Mammary epithelial cell (primary cell): ENCODE measurements at regions of chr12 and their contacts with region 1.

Region 1: GRCh38 chr12:104201238-104202001 is 14.2 kb upstream of the TXNRD1 start:
- DNase-seq: peak; percentile 41
- H3K4me3 ChIP-seq: no peak overlapping the region
- H3K27ac ChIP-seq: no peak overlapping the region
- H3K4me1 ChIP-seq: no peaks in the 10 kb centered on the region
- H3K27me3 ChIP-seq: no peaks in the 10 kb centered on the region
- CTCF ChIP-seq: peak; percentile 90 to 93

Region 2: GRCh38 chr12:104057771-104058197 is 143.6 kb before region 1 on chr12:
- CTCF ChIA-PET with region 1: no interaction called
- dilution Hi-C with region 1: no loop called
- in situ Hi-C with region 1: no loop called
- intact Hi-C with region 1: loop called (anchors 10 kb)
- DNase-seq: no peak
- H3K4me3 ChIP-seq: no peak overlapping the region
- H3K27ac ChIP-seq: no peak overlapping the region
- H3K4me1 ChIP-seq: peaks cover 24% of the 10 kb centered on the region
- H3K27me3 ChIP-seq: no peaks in the 10 kb centered on the region
- CTCF ChIP-seq: peak; percentile 80 to 86

Region 3: DNA sequence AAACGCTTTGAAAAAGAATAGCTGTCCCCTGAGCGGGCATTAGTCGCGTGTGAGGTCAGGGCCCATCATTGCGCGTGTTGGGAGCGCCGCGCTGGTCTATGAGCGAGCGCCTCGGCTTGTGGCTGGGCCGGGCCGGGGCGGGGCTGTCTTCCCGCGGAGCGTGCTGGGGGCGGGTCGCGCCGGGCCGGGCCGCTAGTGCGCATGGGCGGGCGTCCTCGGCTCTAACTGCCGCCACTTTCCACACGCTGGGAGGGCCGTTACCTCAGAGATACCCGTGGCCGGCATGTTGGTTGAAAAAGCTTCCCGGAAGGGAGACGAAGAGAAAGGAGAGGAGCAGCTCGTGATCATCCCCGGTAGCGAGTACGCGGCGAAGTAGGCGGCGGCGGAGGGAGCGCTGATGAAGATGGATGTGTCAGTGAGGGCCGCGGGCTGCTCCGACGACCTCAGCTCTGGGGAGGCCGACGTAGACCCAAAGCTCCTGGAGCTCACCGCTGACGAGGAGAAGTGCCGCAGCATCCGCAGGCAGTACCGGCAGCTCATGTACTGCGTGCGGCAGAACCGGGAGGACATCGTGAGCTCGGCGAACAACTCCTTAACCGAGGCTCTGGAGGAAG is 102.2 kb after region 1 on chr12 and contains the start of gene EID3:
- CTCF ChIA-PET with region 1: interaction called, 3 read pairs
- dilution Hi-C with region 1: no loop called
- in situ Hi-C with region 1: no loop called
- intact Hi-C with region 1: loop called (anchors 5 kb)
- DNase-seq: peak; percentile 71
- H3K4me3 ChIP-seq: peak within 1 kb of the TSS; percentile 32 to 55 (median 46)
- H3K27ac ChIP-seq: peak within 1 kb of the TSS; percentile 61
- H3K4me1 ChIP-seq: peaks cover 20% of the 10 kb centered on the region
- H3K27me3 ChIP-seq: no peaks in the 10 kb centered on the region
- CTCF ChIP-seq: no peak
- total RNA-seq, gene EID3: 5.3 to 6.3 TPM

Region 4: GRCh38 chr12:104376650-104377541 is 175.5 kb after region 1 on chr12:
- CTCF ChIA-PET with region 1: no interaction called
- dilution Hi-C with region 1: no loop called
- in situ Hi-C with region 1: no loop called
- intact Hi-C with region 1: loop called (anchors 1 kb)
- DNase-seq: no peak
- H3K4me3 ChIP-seq: no peak overlapping the region
- H3K27ac ChIP-seq: no peak overlapping the region
- H3K4me1 ChIP-seq: no peaks in the 10 kb centered on the region
- H3K27me3 ChIP-seq: no peaks in the 10 kb centered on the region
- CTCF ChIP-seq: no peak

Region 5: GRCh38 chr12:104456417-104456949 is 255.1 kb after region 1 on chr12 and contains the start of gene CHST11:
- CTCF ChIA-PET with region 1: no interaction called
- dilution Hi-C with region 1: no loop called
- in situ Hi-C with region 1: no loop called
- intact Hi-C with region 1: loop called (anchors 1 kb)
- DNase-seq: peak; percentile 82
- H3K4me3 ChIP-seq: peak within 1 kb of the TSS; percentile 56 to 77 (median 68)
- H3K27ac ChIP-seq: peak within 1 kb of the TSS; percentile 60
- H3K4me1 ChIP-seq: peaks cover 36% of the 10 kb centered on the region
- H3K27me3 ChIP-seq: no peaks in the 10 kb centered on the region
- CTCF ChIP-seq: peak in 1 of 2 donors; percentile 37
- total RNA-seq, gene CHST11: 7.7 to 35.5 TPM

Region 6: GRCh38 chr12:104588068-104588920 is 386.9 kb after region 1 on chr12:
- CTCF ChIA-PET with region 1: no interaction called
- dilution Hi-C with region 1: no loop called
- in situ Hi-C with region 1: no loop called
- intact Hi-C with region 1: no loop called
- DNase-seq: peak; percentile 97
- H3K4me3 ChIP-seq: peak overlapping the region; percentile 13 to 45 (median 32)
- H3K27ac ChIP-seq: peak overlapping the region; percentile 94
- H3K4me1 ChIP-seq: peaks cover 58% of the 10 kb centered on the region
- H3K27me3 ChIP-seq: no peaks in the 10 kb centered on the region
- CTCF ChIP-seq: no peak

Region 7: DNA sequence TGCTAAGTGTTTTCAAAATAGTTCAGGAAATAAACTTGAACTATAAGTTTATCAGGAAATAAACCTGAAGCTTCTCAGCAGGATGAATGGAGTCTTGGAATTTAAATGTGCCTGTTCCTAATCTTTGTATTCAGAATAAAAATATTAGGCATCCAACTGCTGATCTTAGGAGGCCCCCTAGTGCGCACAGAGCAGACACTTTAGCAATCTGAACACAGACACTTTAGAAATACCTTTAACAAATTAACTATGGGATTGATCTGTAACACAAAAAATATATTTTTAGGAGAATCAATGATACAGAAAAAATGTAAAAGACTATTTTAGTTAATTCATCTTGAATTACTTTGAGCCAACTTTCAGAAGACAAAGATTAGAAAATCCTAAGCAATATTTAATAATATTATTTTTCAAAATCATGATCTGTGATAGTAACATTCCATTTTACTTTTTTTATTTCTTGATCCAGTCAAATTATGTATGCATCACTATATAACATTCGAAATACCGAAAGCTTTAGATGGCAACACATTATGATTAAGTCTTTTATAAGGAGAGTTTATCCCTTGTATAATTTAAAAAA is 675.8 kb after region 1 on chr12:
- CTCF ChIA-PET with region 1: no interaction called
- dilution Hi-C with region 1: no loop called
- in situ Hi-C with region 1: loop called in 1 of 2 experiments (anchors 25 kb)
- intact Hi-C with region 1: loop called (anchors 2 kb)
- DNase-seq: peak; percentile 19
- H3K4me3 ChIP-seq: no peak overlapping the region
- H3K27ac ChIP-seq: no peak overlapping the region
- H3K4me1 ChIP-seq: no peaks in the 10 kb centered on the region
- H3K27me3 ChIP-seq: no peaks in the 10 kb centered on the region
- CTCF ChIP-seq: peak; percentile 56 to 74

Region 8: GRCh38 chr12:105382771-105383622 is 1181.6 kb after region 1 on chr12:
- CTCF ChIA-PET with region 1: no interaction called
- dilution Hi-C with region 1: no loop called
- in situ Hi-C with region 1: no loop called
- intact Hi-C with region 1: loop called (anchors 5 kb)
- DNase-seq: peak; percentile 47
- H3K4me3 ChIP-seq: no peak overlapping the region
- H3K27ac ChIP-seq: no peak overlapping the region
- H3K4me1 ChIP-seq: peaks cover 20% of the 10 kb centered on the region
- H3K27me3 ChIP-seq: no peaks in the 10 kb centered on the region
- CTCF ChIP-seq: peak; percentile 75 to 82